HepG2 (cell line): ENCODE measurements at regions of chr5 and their contacts with region 1.

Region 1: DNA sequence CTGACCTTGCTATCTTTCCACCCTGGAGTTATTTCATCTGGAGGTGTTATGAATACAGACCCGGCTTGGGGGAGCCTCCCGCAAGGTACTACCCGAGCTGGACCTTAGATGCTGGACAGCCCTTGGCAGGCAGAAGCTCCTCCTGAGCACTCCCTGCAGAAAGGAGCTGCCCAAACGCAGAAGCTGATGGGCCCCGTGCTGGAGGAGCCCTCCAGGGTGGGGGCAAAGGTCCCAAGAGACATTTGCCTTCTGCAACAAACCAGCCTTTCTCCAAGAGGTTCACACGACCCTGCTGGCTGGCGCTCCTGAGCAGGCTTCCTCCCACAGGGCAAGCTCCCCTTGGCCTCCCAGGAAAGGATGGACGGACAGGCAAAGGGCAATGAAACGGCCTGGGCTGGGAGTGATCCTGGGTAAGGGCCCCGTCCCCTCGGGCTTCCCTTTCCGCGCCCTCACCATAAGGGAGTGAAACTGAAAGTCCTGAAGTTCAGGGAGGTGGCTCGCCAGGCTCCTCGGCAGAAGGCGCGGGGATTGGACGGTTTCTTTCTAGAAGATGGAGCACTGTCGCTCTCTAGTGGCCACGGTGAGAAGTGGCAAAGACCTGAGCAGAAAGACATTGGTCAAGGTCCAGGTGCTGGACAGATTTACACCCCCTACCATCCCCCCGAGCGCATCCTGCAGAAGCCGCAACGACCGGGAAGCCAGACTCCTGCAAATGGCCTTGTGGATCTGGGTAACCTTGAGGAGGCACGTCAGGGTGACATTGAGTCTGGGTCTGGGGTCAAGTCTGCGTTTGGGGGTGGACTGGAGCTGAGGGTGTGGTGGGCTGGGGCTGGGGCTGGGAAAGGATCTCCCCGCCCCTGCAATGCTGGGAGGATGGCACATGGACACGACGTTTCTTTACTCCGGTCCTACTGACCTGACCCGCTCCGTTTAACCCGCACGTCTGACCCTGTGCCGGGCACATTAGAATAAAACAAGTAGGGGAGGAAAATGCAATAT is 56.4 kb downstream of the NEURL1B start:
- DNase-seq: peak; percentile 77
- ATAC-seq: peak; percentile 84
- H3K4me3 ChIP-seq: peak overlapping the region; percentile 60 to 76 (median 64)
- H3K27ac ChIP-seq: no peak overlapping the region
- H3K4me1 ChIP-seq: peaks cover 21% of the 10 kb centered on the region
- H3K27me3 ChIP-seq: peaks cover 4 to 54% of the 10 kb centered on the region in 2 experiments
- CTCF ChIP-seq: peak; percentile 98
- EP300 ChIP-seq: no peak
- POLR2A ChIP-seq: 0 out of 4 replicates have a peak, but pooled peaks of 1 of the 2 experiments have one; percentile 23
- RAD21 ChIP-seq: peak; percentile 93

Region 2: DNA sequence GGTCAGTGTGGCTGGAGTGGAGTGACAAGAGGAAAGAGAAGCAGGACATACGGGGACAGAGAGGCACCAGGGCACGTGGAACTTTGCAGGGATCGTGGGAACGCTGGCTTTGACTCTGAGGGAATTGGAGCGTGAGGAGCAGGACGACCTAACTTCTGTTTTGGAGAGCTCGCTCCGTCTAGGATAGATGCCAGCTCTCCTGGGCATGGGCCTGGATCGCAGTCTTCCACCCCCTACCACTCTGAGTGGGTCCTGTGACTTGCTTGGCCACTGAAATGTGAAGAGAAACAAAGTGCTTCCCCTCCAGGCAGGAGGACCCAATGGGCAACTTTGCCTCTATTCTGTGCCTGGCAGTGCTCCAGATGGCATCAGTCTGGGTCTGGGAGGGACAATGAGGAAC is 234.4 kb before region 1 on chr5:
- CTCF ChIA-PET with region 1: interaction called, 13 read pairs
- POLR2A ChIA-PET with region 1: no interaction called
- in situ Hi-C with region 1: no loop called
- intact Hi-C with region 1: loop called (anchors 1 kb)
- DNase-seq: no peak
- ATAC-seq: no peak
- H3K4me3 ChIP-seq: no peak overlapping the region
- H3K27ac ChIP-seq: no peak overlapping the region
- H3K4me1 ChIP-seq: peaks cover 31% of the 10 kb centered on the region
- H3K27me3 ChIP-seq: peaks cover 2 to 9% of the 10 kb centered on the region in 2 experiments; a peak in 2 of 5 replicates
- CTCF ChIP-seq: no peak
- EP300 ChIP-seq: no peak
- POLR2A ChIP-seq: no peak
- RAD21 ChIP-seq: no peak

Region 3: GRCh38 chr5:172479044-172479783 is 218.2 kb before region 1 on chr5:
- CTCF ChIA-PET with region 1: interaction called, 170 read pairs
- POLR2A ChIA-PET with region 1: no interaction called
- in situ Hi-C with region 1: loop called (anchors 5 kb)
- intact Hi-C with region 1: loop called (anchors 1 kb)
- DNase-seq: peak; percentile 89
- ATAC-seq: peak; percentile 98
- H3K4me3 ChIP-seq: no peak overlapping the region
- H3K27ac ChIP-seq: no peak overlapping the region
- H3K4me1 ChIP-seq: no peaks in the 10 kb centered on the region
- H3K27me3 ChIP-seq: peaks cover 0 to 5% of the 10 kb centered on the region in 2 experiments; a peak in 1 of 5 replicates
- CTCF ChIP-seq: peak; percentile 95
- EP300 ChIP-seq: no peak
- POLR2A ChIP-seq: no peak
- RAD21 ChIP-seq: peak; percentile 96

Region 4: DNA sequence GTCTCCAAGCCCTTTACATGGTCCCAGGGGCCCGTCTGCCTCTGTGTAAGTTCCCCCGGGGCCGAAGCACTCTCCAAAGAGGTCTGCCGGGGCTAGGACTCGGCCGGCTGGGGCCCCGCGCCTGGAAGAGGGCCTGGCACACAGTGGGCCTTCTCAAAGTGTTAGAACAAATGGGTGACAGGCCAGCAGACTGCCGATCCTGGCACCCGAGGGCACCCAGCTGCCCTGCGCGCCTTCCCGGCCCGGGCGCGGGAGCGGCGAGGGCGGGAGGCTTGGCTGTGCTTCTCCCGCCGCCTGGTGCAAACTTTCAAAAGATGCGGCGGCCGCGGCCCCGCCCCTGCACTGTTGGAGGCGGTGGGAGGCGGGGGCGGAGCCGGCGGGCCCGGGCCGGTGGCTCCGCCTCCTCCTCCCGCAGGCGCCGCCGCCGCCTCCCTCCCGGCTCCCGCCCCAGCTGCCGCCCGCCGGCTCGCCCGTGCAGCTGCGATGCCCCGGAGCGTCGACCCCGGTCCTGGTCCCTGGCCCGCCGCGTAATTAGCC is 56.5 kb before region 1 on chr5 and contains the start of gene NEURL1B:
- CTCF ChIA-PET with region 1: no interaction called
- POLR2A ChIA-PET with region 1: no interaction called
- in situ Hi-C with region 1: no loop called
- intact Hi-C with region 1: loop called (anchors 10 kb)
- DNase-seq: peak; percentile 29
- ATAC-seq: peak; percentile 82
- H3K4me3 ChIP-seq: peak within 1 kb of the TSS; percentile 52 to 68 (median 54)
- H3K27ac ChIP-seq: no peak within 1 kb of the TSS
- H3K4me1 ChIP-seq: peaks cover 9% of the 10 kb centered on the region
- H3K27me3 ChIP-seq: peaks cover 0 to 33% of the 10 kb centered on the region in 2 experiments; a peak in 3 of 5 replicates
- CTCF ChIP-seq: no peak; the same call in 1 of the 2 replicates
- EP300 ChIP-seq: no peak
- POLR2A ChIP-seq: no peak
- RAD21 ChIP-seq: no peak
- total RNA-seq, gene NEURL1B: 0.09 and 0.11 TPM in 2 replicates

Region 5: GRCh38 chr5:172659909-172660628 is 37.4 kb before region 1 on chr5:
- CTCF ChIA-PET with region 1: no interaction called
- POLR2A ChIA-PET with region 1: interaction called, 3 read pairs
- in situ Hi-C with region 1: no loop called
- intact Hi-C with region 1: loop called (anchors 2 kb)
- DNase-seq: peak; percentile 95
- ATAC-seq: peak; percentile 94
- H3K4me3 ChIP-seq: peak overlapping the region; percentile 20 to 67 (median 36); a peak in 5 of 6 replicates
- H3K27ac ChIP-seq: peak overlapping the region; percentile 93
- H3K4me1 ChIP-seq: peaks cover 47% of the 10 kb centered on the region
- H3K27me3 ChIP-seq: 0 out of 5 replicates have a peak, but pooled peaks cover 0 to under 1% of the 10 kb centered on the region in 2 experiments
- CTCF ChIP-seq: peak; percentile 62
- EP300 ChIP-seq: peak in 1 of 2 experiments; percentile 53; a peak in 1 of 4 replicates
- POLR2A ChIP-seq: peak; percentile 30 to 67; a peak in 3 of 4 replicates
- RAD21 ChIP-seq: peak; percentile 51

Region 6: DNA sequence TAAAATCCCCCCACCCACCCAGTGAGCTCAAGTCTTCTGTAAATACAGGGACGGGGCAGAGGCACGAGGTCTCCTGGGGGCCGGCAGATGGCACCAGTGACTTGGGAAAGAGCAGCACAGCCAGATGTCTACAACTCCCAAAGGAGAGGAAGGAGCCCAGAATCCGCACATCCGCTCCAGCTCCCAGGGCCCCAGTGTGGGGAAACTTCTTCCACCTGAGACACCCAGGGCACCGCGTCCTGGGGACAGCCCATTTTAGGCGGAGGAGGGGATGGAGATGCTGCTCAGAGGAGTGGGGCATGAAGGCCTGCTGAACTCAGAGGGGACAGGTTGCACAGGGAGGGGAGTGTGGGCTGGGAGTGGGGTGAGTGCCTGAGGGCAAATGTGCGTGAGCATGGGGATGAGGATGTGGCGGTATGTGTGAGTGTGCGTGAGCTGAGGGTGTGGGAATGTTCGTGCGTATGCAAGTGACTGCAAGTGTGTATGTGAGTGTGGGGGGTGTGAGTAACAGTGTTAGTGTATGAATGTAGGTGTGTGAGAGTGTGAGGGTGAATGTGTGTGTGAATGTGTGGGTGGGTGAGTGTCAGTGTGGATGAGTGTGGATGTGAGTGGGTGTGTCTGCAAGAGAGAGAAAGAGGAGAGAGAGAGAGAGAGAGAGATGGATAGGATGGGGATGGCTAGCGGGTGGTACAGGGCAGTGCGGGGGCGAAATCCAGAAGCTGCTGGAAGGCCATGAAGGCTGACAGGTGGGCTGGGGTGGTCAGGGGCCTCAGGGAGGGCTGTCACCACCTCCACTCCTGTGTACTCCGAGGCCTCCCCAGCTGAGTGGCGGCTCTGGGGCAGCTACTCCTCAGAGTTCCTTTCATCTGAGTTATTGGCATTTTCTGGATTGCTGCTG is 10.1 kb after region 1 on chr5:
- CTCF ChIA-PET with region 1: no interaction called
- POLR2A ChIA-PET with region 1: no interaction called
- in situ Hi-C with region 1: no loop called
- intact Hi-C with region 1: no loop called
- DNase-seq: peak; percentile 58
- ATAC-seq: peak; percentile 96
- H3K4me3 ChIP-seq: no peak overlapping the region
- H3K27ac ChIP-seq: no peak overlapping the region
- H3K4me1 ChIP-seq: peaks cover 20% of the 10 kb centered on the region
- H3K27me3 ChIP-seq: peaks cover 4 to 23% of the 10 kb centered on the region in 2 experiments; a peak in 4 of 5 replicates
- CTCF ChIP-seq: peak; percentile 88
- EP300 ChIP-seq: no peak
- POLR2A ChIP-seq: no peak
- RAD21 ChIP-seq: peak; percentile 85

Region 7: DNA sequence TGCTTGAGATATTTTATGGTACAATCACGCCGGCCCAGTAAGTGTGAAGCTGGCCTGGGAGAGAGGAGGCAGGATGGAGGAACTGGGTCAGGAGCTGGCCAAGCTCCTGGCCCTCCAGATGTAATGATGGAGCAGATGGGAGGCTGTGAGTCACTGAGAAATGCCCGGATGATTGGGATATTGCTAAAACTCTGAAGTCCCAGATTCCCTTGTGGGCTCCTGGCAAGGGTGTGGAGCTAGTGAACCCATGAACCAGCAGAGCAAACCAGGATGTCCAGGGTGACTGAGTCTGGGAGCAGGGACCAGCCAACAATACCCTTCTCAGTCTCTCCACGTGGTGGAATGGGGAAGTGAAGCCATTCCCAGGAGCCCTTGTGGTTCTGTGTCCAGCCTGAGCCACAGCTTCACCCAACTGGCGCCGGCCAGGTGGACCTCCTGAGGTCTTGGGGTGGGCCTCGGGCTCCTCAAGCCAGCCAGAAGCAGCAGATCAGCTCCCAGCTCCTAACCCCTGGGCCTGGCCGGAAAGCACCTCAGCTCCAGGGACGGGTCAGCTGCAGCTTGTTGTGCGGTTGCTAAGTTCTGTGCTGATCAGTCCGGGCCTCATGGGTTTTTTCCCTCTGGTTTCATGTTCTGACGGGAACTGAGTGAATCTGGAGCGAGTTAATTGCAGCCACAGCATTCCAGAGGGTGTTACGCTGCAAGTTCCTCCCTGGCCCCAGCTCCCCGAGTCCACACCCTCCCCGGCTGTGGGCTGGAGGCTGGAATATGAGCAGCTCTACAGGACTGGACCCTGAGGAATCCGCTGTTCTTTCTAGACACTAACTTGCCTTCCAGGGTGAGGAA is 35.9 kb after region 1 on chr5:
- CTCF ChIA-PET with region 1: no interaction called
- POLR2A ChIA-PET with region 1: no interaction called
- in situ Hi-C with region 1: no loop called
- intact Hi-C with region 1: no loop called
- DNase-seq: peak; percentile 51
- ATAC-seq: peak; percentile 71
- H3K4me3 ChIP-seq: peak overlapping the region; percentile 36 to 57 (median 37); a peak in 5 of 6 replicates
- H3K27ac ChIP-seq: peak overlapping the region; percentile 17
- H3K4me1 ChIP-seq: peaks cover 88% of the 10 kb centered on the region
- H3K27me3 ChIP-seq: peaks cover 0 to 15% of the 10 kb centered on the region in 2 experiments; a peak in 3 of 5 replicates
- CTCF ChIP-seq: no peak
- EP300 ChIP-seq: no peak
- POLR2A ChIP-seq: 0 out of 4 replicates have a peak, but pooled peaks of 1 of the 2 experiments have one; percentile 21
- RAD21 ChIP-seq: no peak

Region 8: GRCh38 chr5:172886974-172887501 is 189.6 kb after region 1 on chr5:
- CTCF ChIA-PET with region 1: no interaction called
- POLR2A ChIA-PET with region 1: no interaction called
- in situ Hi-C with region 1: no loop called
- intact Hi-C with region 1: no loop called
- DNase-seq: peak; percentile 85
- ATAC-seq: peak; percentile 64
- H3K4me3 ChIP-seq: no peak overlapping the region
- H3K27ac ChIP-seq: peak overlapping the region; percentile 41
- H3K4me1 ChIP-seq: peaks cover 18% of the 10 kb centered on the region
- H3K27me3 ChIP-seq: no peaks in the 10 kb centered on the region
- CTCF ChIP-seq: no peak
- EP300 ChIP-seq: peak; percentile 35 to 67; a peak in 1 of 4 replicates
- POLR2A ChIP-seq: no peak
- RAD21 ChIP-seq: no peak